ENCODE measurements at regions of chr11 and their contacts with region 1.

Region 1: GRCh38 chr11:20609727-20610707 is 10.6 kb downstream of the SLC6A5 start:
- DNase-seq: peak; percentile 50 to 93 (median 78)
- ATAC-seq: peak; percentile 98 to 100 (median 100)
- H3K4me3 ChIP-seq: no peak overlapping the region
- H3K27ac ChIP-seq: no peak overlapping the region
- H3K4me1 ChIP-seq: no peaks in the 10 kb centered on the region
- H3K27me3 ChIP-seq: peaks cover 0 to 19% (median 2%) of the 10 kb centered on the region in 4 donors
- CTCF ChIP-seq: peak; percentile 89 to 94 (median 92)

Region 2: GRCh38 chr11:20289732-20290131 is 320.3 kb before region 1 on chr11:
- intact Hi-C with region 1: no loop called
- DNase-seq: no peak
- ATAC-seq: no peak
- H3K4me3 ChIP-seq: no peak overlapping the region
- H3K27ac ChIP-seq: no peak overlapping the region
- H3K4me1 ChIP-seq: no peaks in the 10 kb centered on the region
- H3K27me3 ChIP-seq: peaks cover 0 to 3% (median 0%) of the 10 kb centered on the region in 4 donors
- CTCF ChIP-seq: no peak

Region 3: GRCh38 chr11:20387241-20388095 is 222.5 kb before region 1 on chr11 and contains the start of gene PRMT3:
- intact Hi-C with region 1: loop called in 1 of 3 experiments (anchors 10 kb)
- DNase-seq: peak; percentile 92 to 99 (median 96)
- ATAC-seq: peak; percentile 95 to 98 (median 97)
- H3K4me3 ChIP-seq: peak within 1 kb of the TSS; percentile 62 to 95 (median 87)
- H3K27ac ChIP-seq: peak within 1 kb of the TSS; percentile 67 to 90 (median 84)
- H3K4me1 ChIP-seq: peaks cover 0 to 9% (median 7%) of the 10 kb centered on the region in 3 donors
- H3K27me3 ChIP-seq: no peaks in the 10 kb centered on the region
- CTCF ChIP-seq: peak; percentile 45 to 88 (median 86)
- total RNA-seq, gene PRMT3: 5.1 to 10.3 (median 6.3) TPM

Region 4: GRCh38 chr11:20403059-20403458 is 207.0 kb before region 1 on chr11:
- intact Hi-C with region 1: loop called in 1 of 3 experiments (anchors 5 kb)
- DNase-seq: no peak
- ATAC-seq: no peak
- H3K4me3 ChIP-seq: no peak overlapping the region
- H3K27ac ChIP-seq: no peak overlapping the region
- H3K4me1 ChIP-seq: no peaks in the 10 kb centered on the region
- H3K27me3 ChIP-seq: no peaks in the 10 kb centered on the region
- CTCF ChIP-seq: no peak

Measured in pancreas (tissue), 10 donors.